Psoas muscle (tissue), 8 donors: ENCODE measurements at regions of chr11 and their contacts with region 1.

Region 1: GRCh38 chr11:18347471-18348125 is 25.2 kb downstream of the GTF2H1 start:
- DNase-seq: no peak
- ATAC-seq: no peak
- H3K4me3 ChIP-seq: no peak overlapping the region
- H3K27ac ChIP-seq: no peak overlapping the region
- H3K4me1 ChIP-seq: no peaks in the 10 kb centered on the region
- H3K27me3 ChIP-seq: no peaks in the 10 kb centered on the region
- CTCF ChIP-seq: no peak

Region 2: DNA sequence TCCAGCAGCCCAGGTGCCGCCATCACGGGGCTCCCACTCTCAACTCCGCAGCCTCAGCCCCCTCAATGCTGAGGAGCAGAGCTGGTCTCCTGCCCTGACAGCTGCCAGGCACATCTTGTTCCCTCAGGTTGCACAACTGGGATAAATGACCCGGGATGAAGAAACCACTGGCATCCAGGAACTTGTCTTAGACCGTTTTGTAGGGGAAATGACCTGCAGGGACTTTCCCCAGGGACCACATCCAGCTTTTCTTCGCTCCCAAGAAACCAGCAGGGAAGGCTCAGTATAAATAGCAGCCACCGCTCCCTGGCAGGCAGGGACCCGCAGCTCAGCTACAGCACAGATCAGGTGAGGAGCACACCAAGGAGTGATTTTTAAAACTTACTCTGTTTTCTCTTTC is 81.6 kb before region 1 on chr11 and contains the start of gene SAA1:
- intact Hi-C with region 1: no loop called
- DNase-seq: no peak
- ATAC-seq: peak; percentile 15 to 72 (median 47)
- H3K4me3 ChIP-seq: no peak within 1 kb of the TSS
- H3K27ac ChIP-seq: no peak within 1 kb of the TSS
- H3K4me1 ChIP-seq: no peaks in the 10 kb centered on the region
- H3K27me3 ChIP-seq: peaks cover 0 to 4% (median 0%) of the 10 kb centered on the region in 3 donors
- CTCF ChIP-seq: no peak
- total RNA-seq, gene SAA1: 29.1 to 100 (median 36.2) TPM

Region 3: DNA sequence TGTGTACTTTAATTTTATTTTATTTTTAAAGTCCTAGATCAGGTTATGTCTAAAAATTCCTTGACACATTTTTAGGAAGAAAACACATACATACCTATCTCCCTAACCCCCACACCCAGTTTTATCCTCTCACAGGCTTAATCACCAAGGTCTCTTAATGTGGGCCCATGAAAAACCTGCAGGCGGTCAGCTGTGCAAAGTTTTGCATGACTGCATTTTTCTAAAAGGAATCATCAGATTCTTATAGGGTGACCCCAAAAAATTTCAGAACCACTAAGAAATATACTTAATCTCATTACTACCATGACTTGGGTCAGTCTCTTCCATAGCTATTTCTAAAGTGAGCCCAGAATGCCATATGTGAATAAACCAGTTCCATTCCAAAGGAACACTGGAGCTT is 61.8 kb before region 1 on chr11:
- intact Hi-C with region 1: loop called in 1 of 2 experiments (anchors 5 kb)
- DNase-seq: no peak
- ATAC-seq: no peak
- H3K4me3 ChIP-seq: no peak overlapping the region
- H3K27ac ChIP-seq: no peak overlapping the region
- H3K4me1 ChIP-seq: no peaks in the 10 kb centered on the region
- H3K27me3 ChIP-seq: no peaks in the 10 kb centered on the region
- CTCF ChIP-seq: no peak